HEK293T (cell line): ENCODE measurements at regions of chr2 and their contacts with region 1.

Region 1: DNA sequence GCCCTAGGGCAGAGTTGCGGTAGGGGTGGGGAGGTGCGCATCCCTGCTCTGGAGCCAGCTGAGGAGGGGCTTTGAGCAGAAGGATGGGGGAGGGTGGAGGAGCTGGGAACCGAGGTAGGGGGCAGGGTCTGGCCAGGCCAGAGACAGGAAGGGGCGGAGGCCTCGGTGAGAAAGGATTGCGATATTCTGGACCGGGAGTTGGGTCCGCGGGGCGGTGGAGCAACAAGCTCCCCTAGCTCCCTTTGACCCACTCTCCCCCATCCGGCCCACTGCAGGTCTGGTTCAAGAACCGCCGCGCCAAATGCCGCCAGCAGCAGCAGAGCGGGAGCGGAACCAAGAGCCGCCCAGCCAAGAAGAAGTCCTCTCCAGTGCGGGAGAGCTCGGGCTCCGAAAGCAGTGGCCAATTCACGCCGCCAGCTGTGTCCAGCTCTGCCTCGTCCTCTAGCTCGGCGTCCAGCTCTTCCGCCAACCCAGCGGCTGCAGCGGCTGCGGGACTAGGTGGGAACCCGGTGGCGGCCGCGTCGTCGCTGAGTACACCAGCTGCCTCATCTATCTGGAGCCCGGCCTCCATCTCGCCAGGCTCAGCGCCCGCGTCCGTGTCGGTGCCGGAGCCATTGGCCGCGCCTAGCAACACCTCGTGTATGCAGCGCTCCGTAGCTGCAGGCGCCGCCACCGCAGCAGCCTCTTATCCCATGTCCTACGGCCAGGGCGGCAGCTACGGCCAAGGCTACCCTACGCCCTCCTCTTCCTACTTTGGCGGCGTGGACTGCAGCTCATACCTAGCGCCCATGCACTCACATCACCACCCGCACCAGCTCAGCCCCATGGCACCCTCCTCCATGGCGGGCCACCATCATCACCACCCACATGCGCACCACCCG is 4.8 kb downstream of the OTX1 start:
- DNase-seq: no peak

Region 2: GRCh38 chr2:63093512-63093911 is 38.0 kb after region 1 on chr2:
- CTCF ChIA-PET with region 1: interaction called, 10 read pairs
- POLR2A ChIA-PET with region 1: no interaction called
- DNase-seq: no peak